OCI-LY7 (cell line): ENCODE measurements at regions of chr20 and their contacts with region 1.

Region 1: DNA sequence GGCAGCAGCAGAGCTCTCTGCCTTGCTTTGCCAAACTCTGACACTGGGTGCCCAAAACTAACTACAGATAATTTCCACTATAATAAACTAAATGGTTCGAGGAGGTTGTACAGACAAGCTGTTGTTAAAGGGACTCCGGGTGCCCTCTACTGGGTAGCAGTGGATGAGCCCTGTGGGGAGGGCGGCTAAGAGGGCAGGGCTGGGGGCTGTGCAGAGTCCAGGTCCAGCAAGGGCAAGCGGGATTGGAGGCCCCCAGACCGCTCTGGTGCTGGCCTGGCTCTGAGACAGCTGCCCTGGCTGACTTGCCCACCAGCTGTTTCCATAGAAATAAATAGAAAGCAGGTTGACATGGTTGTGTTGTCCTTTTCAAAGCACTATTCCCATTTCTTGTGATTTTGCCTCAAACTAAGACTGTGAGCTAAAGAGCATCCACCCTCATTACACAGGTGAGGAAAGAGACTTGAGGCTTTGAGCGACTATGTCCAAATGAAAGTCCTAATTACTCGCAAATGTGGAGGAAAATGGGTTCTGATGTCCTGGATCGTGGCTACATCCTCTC is 167.6 kb upstream of the CST7 start:
- DNase-seq: peak; percentile 45
- H3K4me3 ChIP-seq: no peak overlapping the region
- H3K27ac ChIP-seq: no peak overlapping the region
- H3K4me1 ChIP-seq: peaks cover 7% of the 10 kb centered on the region
- CTCF ChIP-seq: peak; percentile 72

Region 2: DNA sequence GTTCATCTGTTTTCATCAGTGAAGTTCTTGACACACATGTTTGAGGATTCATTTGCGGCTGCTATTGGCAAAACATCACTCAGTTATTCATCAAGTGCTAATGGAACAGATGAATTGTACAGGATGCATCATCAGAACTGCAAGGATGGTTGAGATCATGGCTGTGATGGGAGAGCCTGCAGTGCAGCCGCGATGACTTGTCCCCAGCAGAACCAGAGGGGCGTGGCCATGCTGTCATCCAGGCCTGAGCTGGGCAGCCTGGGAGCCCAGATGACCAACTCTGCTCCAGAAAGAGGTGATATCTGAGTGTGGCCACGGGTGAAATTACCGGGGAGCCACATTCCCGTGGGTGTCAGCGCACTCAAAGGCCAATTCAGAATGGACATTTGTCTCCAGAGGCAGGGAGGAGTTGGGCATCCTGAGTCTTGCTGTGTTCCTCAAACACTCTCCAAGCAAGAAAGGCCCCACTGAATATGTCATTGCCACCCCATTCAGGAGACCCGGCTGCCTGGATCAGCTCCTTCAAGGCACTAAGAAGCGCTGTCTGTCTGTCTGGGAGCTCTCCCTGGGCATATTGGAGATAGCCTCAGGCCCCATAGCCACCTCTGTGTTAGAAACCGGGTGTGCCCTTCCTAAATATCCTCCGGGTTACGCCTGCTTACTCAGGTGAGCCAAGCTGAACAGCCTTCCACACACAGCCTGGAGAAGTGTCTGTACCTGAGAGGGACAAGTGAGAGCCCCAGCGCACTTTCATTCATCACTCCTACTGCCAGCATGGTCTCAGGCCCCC is 245.4 kb before region 1 on chr20:
- CTCF ChIA-PET with region 1: no interaction called
- POLR2A ChIA-PET with region 1: no interaction called
- intact Hi-C with region 1: loop called (anchors 10 kb)
- DNase-seq: no peak
- H3K4me3 ChIP-seq: no peak overlapping the region
- H3K27ac ChIP-seq: no peak overlapping the region
- H3K4me1 ChIP-seq: no peaks in the 10 kb centered on the region
- CTCF ChIP-seq: no peak

Region 3: GRCh38 chr20:24694727-24695597 is 86.5 kb before region 1 on chr20:
- CTCF ChIA-PET with region 1: interaction called, 3 read pairs
- POLR2A ChIA-PET with region 1: no interaction called
- intact Hi-C with region 1: loop called (anchors 5 kb)
- DNase-seq: no peak
- H3K4me3 ChIP-seq: no peak overlapping the region
- H3K27ac ChIP-seq: no peak overlapping the region
- H3K4me1 ChIP-seq: no peaks in the 10 kb centered on the region
- CTCF ChIP-seq: no peak